ENCODE measurements at regions of chr3 and their contacts with region 1.

Region 1: DNA sequence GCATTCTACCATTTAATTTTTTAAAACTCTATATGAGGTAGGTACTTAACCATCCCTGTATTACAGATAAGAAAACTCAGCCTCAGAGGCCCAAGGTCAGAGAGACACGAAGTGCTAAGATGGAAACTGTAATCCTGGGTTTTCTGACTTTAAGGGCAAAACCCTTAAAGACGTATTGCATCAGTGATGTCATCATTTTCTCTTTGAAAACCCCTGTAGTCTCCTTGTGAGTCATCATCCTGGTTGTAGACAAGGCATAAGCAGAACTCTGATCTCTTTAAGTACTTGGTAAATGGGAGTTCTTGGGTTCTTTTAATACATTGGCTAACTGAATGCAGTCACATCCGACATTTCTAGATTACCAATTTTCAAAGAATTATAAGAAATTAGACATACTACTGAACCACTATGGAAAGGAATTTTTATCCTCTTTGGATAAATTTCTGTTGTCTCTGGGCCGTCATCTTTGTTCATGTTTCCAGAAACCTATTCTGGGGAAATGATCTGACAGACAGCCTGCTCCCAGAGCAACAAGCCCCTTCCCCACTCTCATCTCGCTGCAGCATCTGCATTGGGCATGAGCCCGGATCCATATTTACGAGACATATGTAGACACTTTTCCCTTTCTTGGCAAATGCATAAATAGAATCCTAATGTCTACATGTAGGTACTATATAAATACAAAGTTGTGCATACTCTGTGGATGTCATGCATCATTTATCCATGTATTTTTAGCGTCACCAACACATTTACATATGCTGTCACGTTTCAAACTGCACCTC is 48.7 kb upstream of the MDFIC2 start:
- DNase-seq: no peak
- H3K4me3 ChIP-seq: no peak overlapping the region
- H3K27ac ChIP-seq: no peak overlapping the region
- H3K4me1 ChIP-seq: peaks cover 0 to 4% (median 0%) of the 10 kb centered on the region in 4 donors
- H3K27me3 ChIP-seq: no peaks in the 10 kb centered on the region
- CTCF ChIP-seq: no peak
- EP300 ChIP-seq: no peak
- POLR2A ChIP-seq: no peak

Region 2: GRCh38 chr3:70065696-70066253 is 295.4 kb before region 1 on chr3:
- intact Hi-C with region 1: loop called (anchors 5 kb)
- DNase-seq: peak; percentile 35 to 45
- H3K4me3 ChIP-seq: no peak overlapping the region
- H3K27ac ChIP-seq: no peak overlapping the region
- H3K4me1 ChIP-seq: peaks cover 0 to 41% (median 13%) of the 10 kb centered on the region in 4 donors
- H3K27me3 ChIP-seq: no peaks in the 10 kb centered on the region
- CTCF ChIP-seq: peak in 3 of 7 experiments; percentile 9 to 47 (median 19)
- EP300 ChIP-seq: no peak
- POLR2A ChIP-seq: no peak

Region 3: GRCh38 chr3:70127192-70127591 is 234.0 kb before region 1 on chr3:
- intact Hi-C with region 1: no loop called
- DNase-seq: no peak
- H3K4me3 ChIP-seq: no peak overlapping the region
- H3K27ac ChIP-seq: no peak overlapping the region
- H3K4me1 ChIP-seq: no peaks in the 10 kb centered on the region
- H3K27me3 ChIP-seq: no peaks in the 10 kb centered on the region
- CTCF ChIP-seq: no peak
- EP300 ChIP-seq: no peak
- POLR2A ChIP-seq: no peak

Region 4: GRCh38 chr3:70189884-70190473 is 171.2 kb before region 1 on chr3:
- intact Hi-C with region 1: no loop called
- DNase-seq: no peak
- H3K4me3 ChIP-seq: no peak overlapping the region
- H3K27ac ChIP-seq: no peak overlapping the region
- H3K4me1 ChIP-seq: no peaks in the 10 kb centered on the region
- H3K27me3 ChIP-seq: no peaks in the 10 kb centered on the region
- CTCF ChIP-seq: no peak
- EP300 ChIP-seq: no peak
- POLR2A ChIP-seq: no peak